Activated B cell treated with CpG ODN at 0.5 μM for 24 hours (primary cell): ENCODE measurements at regions of chr13 and their contacts with region 1.

Region 1: GRCh38 chr13:21603531-21604448 is at the start of gene MICU2:
- DNase-seq: peak; percentile 93
- ATAC-seq: peak; percentile 94
- H3K4me3 Mint-ChIP-seq: peak within 1 kb of the TSS; percentile 88
- H3K27ac Mint-ChIP-seq: peak within 1 kb of the TSS; percentile 89
- H3K4me1 Mint-ChIP-seq: peaks cover 31% of the 10 kb centered on the region
- H3K27me3 Mint-ChIP-seq: peaks cover 16% of the 10 kb centered on the region
- CTCF ChIP-seq: no peak
- total RNA-seq, gene MICU2: 37.0 and 41.3 TPM in 2 replicates

Region 2: GRCh38 chr13:20566898-20567874 is 1036.6 kb before region 1 on chr13 and contains the start of gene IFT88:
- CTCF ChIA-PET with region 1: no interaction called
- POLR2A ChIA-PET with region 1: no interaction called
- intact Hi-C with region 1: loop called (anchors 1 kb)
- DNase-seq: peak; percentile 92
- ATAC-seq: peak; percentile 90
- H3K4me3 Mint-ChIP-seq: peak within 1 kb of the TSS; percentile 92
- H3K27ac Mint-ChIP-seq: peak within 1 kb of the TSS; percentile 89
- H3K4me1 Mint-ChIP-seq: peaks cover 18% of the 10 kb centered on the region
- H3K27me3 Mint-ChIP-seq: no peaks in the 10 kb centered on the region
- CTCF ChIP-seq: no peak
- total RNA-seq, gene IFT88: 16.4 and 17.3 TPM in 2 replicates

Region 3: GRCh38 chr13:21176220-21176982 is 427.4 kb before region 1 on chr13 and contains the starts of genes MRPL57 and SKA3:
- CTCF ChIA-PET with region 1: no interaction called
- POLR2A ChIA-PET with region 1: interaction called, 15 read pairs
- intact Hi-C with region 1: loop called (anchors 1 kb)
- DNase-seq: peak; percentile 97
- ATAC-seq: peak; percentile 94
- H3K4me3 Mint-ChIP-seq: peak within 1 kb of the TSS; percentile 96
- H3K27ac Mint-ChIP-seq: peak within 1 kb of the TSS; percentile 91
- H3K4me1 Mint-ChIP-seq: peaks cover 22% of the 10 kb centered on the region
- H3K27me3 Mint-ChIP-seq: no peaks in the 10 kb centered on the region
- CTCF ChIP-seq: no peak
- total RNA-seq, gene MRPL57: 11.3 and 12.2 TPM in 2 replicates
- total RNA-seq, gene SKA3: 0.83 and 1.7 TPM in 2 replicates

Region 4: GRCh38 chr13:21435710-21436151 is 168.1 kb before region 1 on chr13:
- CTCF ChIA-PET with region 1: no interaction called
- POLR2A ChIA-PET with region 1: no interaction called
- intact Hi-C with region 1: loop called (anchors 5 kb)
- DNase-seq: peak; percentile 36
- ATAC-seq: peak; percentile 99
- H3K4me3 Mint-ChIP-seq: peak overlapping the region; percentile 67
- H3K27ac Mint-ChIP-seq: peak overlapping the region; percentile 93
- H3K4me1 Mint-ChIP-seq: peaks cover 48% of the 10 kb centered on the region
- H3K27me3 Mint-ChIP-seq: no peaks in the 10 kb centered on the region
- CTCF ChIP-seq: no peak

Region 5: DNA sequence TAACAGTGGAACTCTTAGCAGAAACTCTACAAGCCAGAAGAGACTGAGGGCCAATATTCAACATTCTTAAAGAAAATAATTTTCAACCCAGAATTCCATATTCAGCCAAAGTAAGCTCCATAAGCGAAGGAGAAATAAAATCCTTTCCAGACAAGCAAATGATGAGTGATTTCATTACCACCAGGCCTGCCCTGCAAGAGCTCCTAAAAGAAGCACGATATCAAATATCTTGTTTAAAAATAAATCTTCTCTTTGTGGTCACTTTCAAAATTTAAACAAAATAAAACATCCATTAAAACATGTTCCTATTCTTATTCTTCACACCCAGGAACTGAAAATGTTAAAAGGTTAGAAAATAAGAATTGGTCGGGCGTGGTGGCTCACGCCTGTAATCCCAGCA is 13.6 kb before region 1 on chr13:
- CTCF ChIA-PET with region 1: no interaction called
- POLR2A ChIA-PET with region 1: interaction called, 16 read pairs
- intact Hi-C with region 1: no loop called
- DNase-seq: no peak
- ATAC-seq: no peak
- H3K4me3 Mint-ChIP-seq: peak overlapping the region; percentile 54
- H3K27ac Mint-ChIP-seq: no peak overlapping the region
- H3K4me1 Mint-ChIP-seq: peaks cover 74% of the 10 kb centered on the region
- H3K27me3 Mint-ChIP-seq: no peaks in the 10 kb centered on the region
- CTCF ChIP-seq: no peak

Region 6: GRCh38 chr13:23375001-23375971 is 1771.5 kb after region 1 on chr13:
- CTCF ChIA-PET with region 1: no interaction called
- POLR2A ChIA-PET with region 1: interaction called, 5 read pairs
- intact Hi-C with region 1: loop called (anchors 1 kb)
- DNase-seq: peak; percentile 91
- ATAC-seq: peak; percentile 84
- H3K4me3 Mint-ChIP-seq: peak overlapping the region; percentile 78
- H3K27ac Mint-ChIP-seq: peak overlapping the region; percentile 77
- H3K4me1 Mint-ChIP-seq: peaks cover 66% of the 10 kb centered on the region
- H3K27me3 Mint-ChIP-seq: no peaks in the 10 kb centered on the region
- CTCF ChIP-seq: no peak